WTC11 (cell line): ENCODE measurements at regions of chr22 and their contacts with region 1.

Region 1: DNA sequence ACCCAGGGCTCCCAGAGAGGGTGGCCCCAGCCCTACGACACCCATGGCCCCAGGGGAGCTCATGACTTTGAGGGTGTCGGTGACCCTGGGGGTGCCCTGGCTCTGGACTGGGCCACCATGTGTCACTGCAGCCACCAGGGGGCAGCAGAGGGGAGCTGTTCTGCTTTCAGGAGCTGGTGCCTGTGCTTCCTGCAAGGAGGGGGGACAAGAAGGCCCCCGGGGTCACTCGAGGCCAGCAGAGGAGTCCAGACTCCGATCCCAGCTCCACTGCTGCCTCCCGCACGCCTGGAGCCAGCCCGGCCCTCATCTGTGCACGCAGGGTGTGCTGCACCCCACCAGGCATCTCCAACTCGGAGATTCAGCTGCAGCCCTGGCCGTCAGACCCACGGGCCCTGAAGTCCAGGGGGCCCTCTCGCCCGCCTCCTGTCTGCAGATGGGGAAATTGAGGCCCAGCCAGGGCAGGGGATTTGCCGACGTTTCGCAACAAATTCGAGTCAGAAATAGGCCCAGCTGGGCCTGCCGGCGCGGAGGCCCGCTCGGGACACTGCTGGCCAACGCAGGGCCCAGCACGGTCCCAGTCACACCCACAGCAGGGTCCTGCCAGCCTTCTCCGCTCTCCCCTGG is 29.5 kb upstream of the WNT7B start:
- DNase-seq: peak; percentile 92
- ATAC-seq: peak; percentile 84
- H3K4me3 Mint-ChIP-seq: no peak overlapping the region
- H3K27ac Mint-ChIP-seq: peak overlapping the region; percentile 45
- H3K4me1 Mint-ChIP-seq: no peaks in the 10 kb centered on the region; the same call in 1 of the 2 replicates
- H3K27me3 Mint-ChIP-seq: no peaks in the 10 kb centered on the region
- CTCF ChIP-seq: peak; percentile 89

Region 2: GRCh38 chr22:45863981-45864751 is 142.3 kb before region 1 on chr22:
- CTCF ChIA-PET with region 1: interaction called, 12 read pairs
- POLR2A ChIA-PET with region 1: no interaction called
- DNase-seq: peak; percentile 88
- ATAC-seq: peak; percentile 23
- H3K4me3 Mint-ChIP-seq: no peak overlapping the region
- H3K27ac Mint-ChIP-seq: no peak overlapping the region
- H3K4me1 Mint-ChIP-seq: peaks cover 24% of the 10 kb centered on the region
- H3K27me3 Mint-ChIP-seq: peaks cover 53% of the 10 kb centered on the region
- CTCF ChIP-seq: peak; percentile 97

Region 3: DNA sequence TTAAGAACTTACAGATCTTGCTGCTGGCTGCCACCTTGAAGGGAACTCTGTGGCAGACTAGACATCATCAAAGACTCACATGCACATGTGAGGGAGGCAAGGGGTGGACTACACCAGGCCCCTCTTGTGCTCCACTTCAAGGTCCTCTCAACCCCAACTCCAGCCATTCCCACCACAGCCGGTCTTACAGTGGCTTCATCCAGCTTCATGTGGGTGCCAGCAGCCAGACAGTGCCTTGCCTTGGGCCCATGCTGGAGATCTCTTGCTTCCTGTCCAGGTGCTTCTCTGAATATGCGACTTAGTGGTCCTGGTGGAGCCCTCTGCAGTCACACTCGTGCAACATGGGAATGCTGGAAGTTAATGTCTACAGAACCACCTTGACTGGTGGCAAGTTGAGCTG is 15.1 kb after region 1 on chr22:
- CTCF ChIA-PET with region 1: interaction called, 65 read pairs
- POLR2A ChIA-PET with region 1: no interaction called
- DNase-seq: peak; percentile 4
- ATAC-seq: no peak
- H3K4me3 Mint-ChIP-seq: no peak overlapping the region
- H3K27ac Mint-ChIP-seq: no peak overlapping the region
- H3K4me1 Mint-ChIP-seq: peaks cover 3% of the 10 kb centered on the region
- H3K27me3 Mint-ChIP-seq: peaks cover 31% of the 10 kb centered on the region
- CTCF ChIP-seq: no peak

Region 4: DNA sequence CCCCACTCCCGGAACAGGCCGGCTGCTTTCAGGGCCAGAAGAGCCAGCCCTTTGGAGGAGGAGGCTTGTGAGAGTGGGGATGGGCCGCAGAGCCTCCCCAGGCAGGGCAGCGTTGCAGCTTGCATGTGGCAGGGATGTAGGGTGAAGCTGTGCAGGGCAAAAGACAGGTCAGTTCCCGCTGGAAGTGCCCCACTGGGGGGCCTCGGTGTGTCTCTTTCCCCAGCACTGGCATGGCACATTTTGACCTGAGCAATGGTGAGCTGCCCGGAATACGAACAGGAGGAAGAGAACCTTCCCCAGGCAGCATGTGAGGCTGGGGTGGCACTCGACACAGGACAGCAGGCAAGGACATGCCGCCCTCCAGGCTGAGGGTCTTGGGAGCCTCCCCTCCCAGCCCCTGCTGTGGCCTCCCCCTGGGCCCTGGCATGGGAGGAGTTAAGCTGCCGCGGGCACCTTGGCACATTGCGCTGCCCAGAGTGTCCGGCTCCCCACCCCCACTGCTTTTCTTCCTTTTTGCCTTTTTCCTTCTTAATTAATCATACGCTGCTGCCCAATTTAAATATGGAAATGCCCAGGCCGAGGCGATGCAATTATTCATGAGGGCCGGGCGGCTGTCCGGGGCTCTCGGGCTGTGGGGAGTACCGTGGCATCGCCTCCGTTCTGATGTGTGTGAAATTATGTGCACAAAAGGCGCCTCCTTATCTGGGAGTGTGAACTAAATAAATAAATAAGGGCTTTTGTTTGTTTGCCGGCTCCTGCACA is 46.5 kb after region 1 on chr22:
- CTCF ChIA-PET with region 1: interaction called, 21 read pairs
- POLR2A ChIA-PET with region 1: no interaction called
- DNase-seq: peak; percentile 11
- ATAC-seq: peak; percentile 48; the same call in 1 of the 2 replicates
- H3K4me3 Mint-ChIP-seq: no peak overlapping the region
- H3K27ac Mint-ChIP-seq: 0 out of 2 replicates have a peak overlapping the region, but pooled peaks have one; percentile 19
- H3K4me1 Mint-ChIP-seq: no peaks in the 10 kb centered on the region
- H3K27me3 Mint-ChIP-seq: no peaks in the 10 kb centered on the region
- CTCF ChIP-seq: no peak

Region 5: DNA sequence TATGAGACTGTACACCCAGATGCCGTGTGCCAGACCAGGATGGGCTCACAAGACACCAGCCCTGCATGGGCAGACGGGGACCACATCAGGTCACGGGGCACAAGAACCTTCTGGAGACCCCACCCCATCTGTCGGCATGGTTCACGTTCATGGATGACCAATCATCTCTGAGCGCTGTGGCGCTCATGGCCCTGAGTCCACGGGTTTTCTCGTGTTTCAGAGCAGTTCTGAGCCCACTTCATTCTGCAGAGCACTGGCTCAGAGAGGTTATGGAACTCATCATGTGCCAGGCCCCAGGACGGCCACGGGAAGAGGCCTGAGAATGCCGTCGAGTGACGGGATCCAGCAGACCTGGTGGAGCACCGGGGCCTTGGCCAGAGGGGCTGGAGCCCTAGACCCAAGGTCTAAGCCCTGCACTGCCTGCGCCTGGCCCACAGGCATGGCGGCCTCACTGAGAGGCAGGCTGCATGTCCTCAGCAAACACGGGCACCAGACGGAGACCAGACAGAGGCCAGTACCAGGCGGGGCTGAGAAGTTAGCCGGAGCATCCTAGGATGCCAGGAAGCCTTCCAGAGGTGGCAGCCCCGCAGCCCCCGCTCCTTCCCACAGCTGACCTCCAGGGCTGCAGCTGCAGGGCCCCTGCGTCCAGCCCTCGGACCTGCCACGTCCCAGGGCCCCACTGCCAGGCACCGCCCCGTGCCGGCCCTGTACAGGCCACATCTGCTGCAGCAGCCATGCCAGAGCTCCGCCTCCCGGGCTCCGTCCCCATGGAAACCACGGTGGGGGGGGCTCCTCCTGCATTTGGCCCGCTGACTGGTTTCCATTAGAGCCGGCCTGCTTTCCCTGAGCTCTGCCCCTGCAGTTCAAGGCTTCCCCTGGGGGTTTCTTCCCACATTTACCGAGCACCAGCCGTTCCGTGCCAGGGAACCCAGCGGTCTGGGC is 81.1 kb after region 1 on chr22:
- CTCF ChIA-PET with region 1: interaction called, 13 read pairs
- POLR2A ChIA-PET with region 1: no interaction called
- DNase-seq: peak; percentile 44
- ATAC-seq: no peak
- H3K4me3 Mint-ChIP-seq: no peak overlapping the region
- H3K27ac Mint-ChIP-seq: no peak overlapping the region
- H3K4me1 Mint-ChIP-seq: no peaks in the 10 kb centered on the region
- H3K27me3 Mint-ChIP-seq: no peaks in the 10 kb centered on the region
- CTCF ChIP-seq: no peak

Region 6: DNA sequence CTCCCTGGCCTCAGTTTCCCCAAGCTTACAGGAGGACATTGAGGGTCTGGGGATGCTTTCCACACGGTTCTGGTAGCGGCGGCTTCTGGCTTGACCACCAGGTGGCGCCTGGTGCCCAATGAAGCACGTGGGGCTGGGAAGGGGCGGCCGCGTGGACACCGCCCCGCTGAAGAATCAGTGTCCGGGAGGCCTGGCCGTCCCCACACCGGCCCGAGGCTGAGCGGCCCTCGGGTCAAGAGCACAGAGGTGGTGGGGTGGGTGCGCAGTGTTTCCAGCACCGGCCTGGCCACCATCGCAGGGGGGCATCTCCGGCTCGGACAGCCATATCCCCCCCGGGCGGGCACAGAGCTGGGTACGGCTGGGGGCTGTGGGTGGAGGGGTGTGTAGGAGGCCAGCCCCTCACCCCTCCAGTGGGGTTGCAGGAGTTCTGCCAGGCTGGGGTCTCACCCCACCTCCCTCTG is 116.0 kb after region 1 on chr22:
- CTCF ChIA-PET with region 1: interaction called, 179 read pairs
- POLR2A ChIA-PET with region 1: no interaction called
- DNase-seq: peak; percentile 77
- ATAC-seq: peak; percentile 77
- H3K4me3 Mint-ChIP-seq: no peak overlapping the region
- H3K27ac Mint-ChIP-seq: no peak overlapping the region
- H3K4me1 Mint-ChIP-seq: no peaks in the 10 kb centered on the region
- H3K27me3 Mint-ChIP-seq: no peaks in the 10 kb centered on the region
- CTCF ChIP-seq: peak; percentile 90